Activated B cell treated with CpG ODN at 0.5 μM for 24 hours (primary cell): ENCODE measurements at regions of chr13 and their contacts with region 1.

Region 1: DNA sequence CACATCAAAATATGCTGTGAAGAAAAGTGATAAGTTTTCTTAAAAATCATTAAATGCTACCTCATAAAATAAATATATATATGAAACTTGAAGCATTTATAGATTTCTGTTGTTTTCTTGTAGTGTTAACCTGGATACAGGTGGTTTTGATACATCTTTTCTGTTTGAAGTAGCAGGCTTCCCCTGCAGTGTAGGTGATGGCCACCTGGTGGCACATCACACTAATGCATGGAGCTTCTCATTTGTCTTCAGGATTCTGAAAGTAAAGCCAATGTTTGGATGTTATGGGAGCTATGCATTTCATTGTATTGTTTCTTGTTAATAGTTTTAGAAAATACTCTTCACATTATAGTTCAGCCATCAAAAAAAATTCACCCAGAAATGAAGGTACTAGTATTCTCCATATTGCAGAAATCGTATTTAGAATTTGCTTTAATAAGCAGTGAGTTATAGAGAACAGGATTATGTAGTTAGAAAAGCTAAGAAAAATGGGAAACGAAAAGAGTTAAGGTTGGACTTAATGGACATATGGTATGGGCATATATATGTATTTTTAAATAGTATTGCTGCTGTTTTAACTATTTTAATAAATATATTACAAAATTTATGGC is 18.7 kb downstream of the GPR180 start:
- DNase-seq: no peak
- ATAC-seq: no peak
- H3K4me3 Mint-ChIP-seq: no peak overlapping the region
- H3K27ac Mint-ChIP-seq: no peak overlapping the region
- H3K4me1 Mint-ChIP-seq: peaks cover 3% of the 10 kb centered on the region
- H3K27me3 Mint-ChIP-seq: no peaks in the 10 kb centered on the region
- CTCF ChIP-seq: no peak

Region 2: GRCh38 chr13:94362411-94362909 is 257.9 kb before region 1 on chr13:
- CTCF ChIA-PET with region 1: interaction called, 6 read pairs
- POLR2A ChIA-PET with region 1: no interaction called
- intact Hi-C with region 1: loop called (anchors 1 kb)
- DNase-seq: no peak
- ATAC-seq: peak; percentile 69
- H3K4me3 Mint-ChIP-seq: no peak overlapping the region
- H3K27ac Mint-ChIP-seq: no peak overlapping the region
- H3K4me1 Mint-ChIP-seq: no peaks in the 10 kb centered on the region
- H3K27me3 Mint-ChIP-seq: no peaks in the 10 kb centered on the region
- CTCF ChIP-seq: peak; percentile 57

Region 3: DNA sequence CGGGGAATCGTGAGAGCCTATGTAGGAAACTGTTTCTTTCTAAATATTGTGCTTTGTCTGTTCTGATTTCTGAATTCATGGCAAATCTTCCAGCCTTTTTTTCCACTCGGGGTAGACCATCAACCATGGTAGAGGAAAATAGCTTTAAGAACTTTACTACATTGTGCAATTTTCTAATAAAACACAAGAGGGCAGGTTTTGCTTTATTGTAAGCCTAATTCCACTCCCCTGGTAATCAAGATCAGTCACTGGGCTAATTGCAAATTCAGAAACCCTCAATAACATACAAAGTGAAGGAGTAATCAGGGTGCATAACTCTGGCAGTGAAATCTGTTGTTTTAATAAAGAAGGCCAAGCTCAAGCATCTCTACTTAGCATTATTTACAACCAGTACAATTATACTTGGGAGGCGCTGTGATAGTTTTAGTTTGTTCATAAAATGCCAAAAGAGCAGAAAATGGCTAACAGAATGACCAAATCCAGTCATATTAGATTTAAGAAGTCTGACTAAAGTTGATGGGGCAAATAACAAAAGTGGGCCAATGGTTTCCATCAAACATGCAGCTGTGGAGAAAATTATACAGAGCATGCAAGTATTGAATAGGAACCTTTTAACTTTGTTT is 184.7 kb before region 1 on chr13:
- CTCF ChIA-PET with region 1: interaction called, 240 read pairs
- POLR2A ChIA-PET with region 1: interaction called, 8 read pairs
- intact Hi-C with region 1: loop called (anchors 1 kb)
- DNase-seq: no peak
- ATAC-seq: peak; percentile 70
- H3K4me3 Mint-ChIP-seq: no peak overlapping the region
- H3K27ac Mint-ChIP-seq: no peak overlapping the region
- H3K4me1 Mint-ChIP-seq: peaks cover 12% of the 10 kb centered on the region
- H3K27me3 Mint-ChIP-seq: peaks cover 7% of the 10 kb centered on the region
- CTCF ChIP-seq: no peak

Region 4: DNA sequence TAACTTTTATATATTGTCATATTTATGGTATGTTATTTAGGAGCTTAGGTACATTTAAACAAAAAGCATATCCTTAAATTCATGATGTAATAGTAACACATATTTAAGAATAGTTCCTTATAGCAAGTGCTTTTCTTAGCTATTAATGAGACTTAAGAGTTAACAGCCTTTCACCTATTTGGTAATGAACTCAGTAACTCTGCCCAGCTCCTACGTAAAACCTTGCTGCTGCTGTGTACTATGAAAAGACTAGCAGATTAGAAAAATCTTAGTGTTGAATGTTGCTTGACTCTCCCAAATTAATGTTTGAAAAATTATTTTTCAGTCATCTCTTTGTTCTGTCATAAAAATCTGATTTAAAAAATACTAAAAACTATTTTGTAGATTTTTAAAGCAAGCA is 11.8 kb before region 1 on chr13:
- CTCF ChIA-PET with region 1: interaction called, 7 read pairs
- POLR2A ChIA-PET with region 1: no interaction called
- intact Hi-C with region 1: loop called (anchors 1 kb)
- DNase-seq: no peak
- ATAC-seq: no peak
- H3K4me3 Mint-ChIP-seq: no peak overlapping the region
- H3K27ac Mint-ChIP-seq: no peak overlapping the region
- H3K4me1 Mint-ChIP-seq: peaks cover 2% of the 10 kb centered on the region
- H3K27me3 Mint-ChIP-seq: no peaks in the 10 kb centered on the region
- CTCF ChIP-seq: no peak